SK-N-SH (cell line): ENCODE measurements at regions of chr14 and their contacts with region 1.

Region 1: DNA sequence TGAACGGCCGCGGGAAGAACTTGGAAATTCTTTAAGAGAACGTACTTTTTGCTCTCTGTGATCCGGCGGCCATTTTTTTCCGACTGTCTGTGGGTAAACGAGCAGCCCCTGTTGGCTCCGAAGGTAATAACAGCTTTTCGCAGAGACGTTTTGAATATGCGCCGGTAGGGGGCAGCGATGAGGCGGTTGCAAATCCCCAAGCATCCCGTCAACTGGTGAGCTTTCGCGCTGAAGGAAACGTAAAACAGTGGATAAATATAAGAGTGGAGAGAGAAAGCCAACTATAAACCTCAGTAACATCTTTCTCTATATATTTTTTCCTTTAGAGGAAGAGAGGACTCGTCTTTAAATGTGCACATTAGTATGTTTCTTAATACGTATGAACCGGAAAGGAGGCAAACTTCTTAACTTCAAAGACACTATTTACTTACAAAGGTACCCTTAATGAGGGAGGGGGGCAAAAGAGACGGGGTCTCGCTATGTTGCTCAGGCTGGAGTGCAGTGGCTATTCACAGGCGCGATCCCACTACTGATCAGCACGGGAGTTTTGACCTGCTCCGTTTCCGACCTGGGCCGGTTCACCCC is 9.6 kb upstream of the NEMF start:
- DNase-seq: peak; percentile 58
- H3K4me3 ChIP-seq: peak overlapping the region; percentile 61 to 98
- H3K27ac ChIP-seq: peak overlapping the region; percentile 84 to 93
- H3K4me1 ChIP-seq: peaks cover 3 to 5% of the 10 kb centered on the region in 2 experiments; a peak in 2 of 4 replicates
- H3K27me3 ChIP-seq: no peaks in the 10 kb centered on the region
- CTCF ChIP-seq: peak; percentile 100
- EP300 ChIP-seq: no peak
- RAD21 ChIP-seq: no peak

Region 2: DNA sequence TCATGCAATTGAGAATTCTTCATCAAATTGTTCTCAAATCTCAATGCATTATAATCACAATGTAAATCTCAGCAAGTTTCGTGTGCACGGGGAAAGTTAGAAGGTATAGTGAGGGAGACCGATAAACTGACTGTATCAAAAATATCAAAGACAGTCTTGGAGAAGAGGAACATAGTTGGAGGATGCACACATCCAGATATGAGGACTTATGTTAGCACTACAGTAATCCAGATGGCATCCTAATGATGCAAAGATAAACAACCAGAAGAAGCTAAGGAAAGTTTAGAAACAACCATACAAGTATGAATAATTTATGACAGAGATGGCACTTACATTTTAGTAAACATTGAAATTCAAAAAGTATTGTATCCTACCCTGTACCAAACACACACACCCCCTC is 1036.1 kb before region 1 on chr14:
- CTCF ChIA-PET with region 1: no interaction called
- POLR2A ChIA-PET with region 1: no interaction called
- DNase-seq: no peak
- H3K4me3 ChIP-seq: no peak overlapping the region
- H3K27ac ChIP-seq: no peak overlapping the region
- H3K4me1 ChIP-seq: no peaks in the 10 kb centered on the region
- H3K27me3 ChIP-seq: no peaks in the 10 kb centered on the region
- CTCF ChIP-seq: no peak
- EP300 ChIP-seq: no peak
- RAD21 ChIP-seq: no peak

Region 3: DNA sequence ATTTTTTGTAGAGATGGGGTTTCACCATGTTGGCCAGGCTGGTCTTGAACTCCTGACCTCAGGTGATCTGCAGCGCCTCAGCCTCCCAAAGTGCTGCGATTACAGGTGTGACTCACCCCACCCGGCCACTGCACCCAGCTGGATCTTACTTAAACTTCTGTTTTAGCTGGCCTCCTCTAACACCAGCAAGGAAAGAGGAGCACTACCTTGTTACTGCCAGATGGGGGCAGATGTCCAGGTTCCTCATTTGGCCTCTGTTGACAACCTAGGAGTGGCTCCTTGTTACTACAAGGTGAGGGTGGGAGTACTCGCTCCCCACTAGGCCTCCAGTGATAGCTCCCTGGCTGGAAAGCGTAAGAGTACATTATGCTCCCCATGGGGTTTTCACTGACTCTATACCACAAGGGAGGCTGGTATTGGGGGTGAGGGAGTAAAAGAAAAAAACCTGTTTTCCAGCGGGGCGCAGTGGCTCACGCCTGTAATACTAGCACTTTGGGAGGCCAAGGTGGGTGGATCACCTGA is 17.6 kb after region 1 on chr14:
- CTCF ChIA-PET with region 1: interaction called, 23 read pairs
- POLR2A ChIA-PET with region 1: no interaction called
- DNase-seq: peak; percentile 65
- H3K4me3 ChIP-seq: no peak overlapping the region
- H3K27ac ChIP-seq: no peak overlapping the region
- H3K4me1 ChIP-seq: no peaks in the 10 kb centered on the region
- H3K27me3 ChIP-seq: no peaks in the 10 kb centered on the region
- CTCF ChIP-seq: peak; percentile 69
- EP300 ChIP-seq: no peak
- RAD21 ChIP-seq: peak; percentile 70

Region 4: GRCh38 chr14:49892636-49893308 is 30.6 kb after region 1 on chr14 and contains the start of gene ARF6:
- CTCF ChIA-PET with region 1: interaction called, 13 read pairs
- POLR2A ChIA-PET with region 1: interaction called, 3 read pairs
- DNase-seq: peak; percentile 98
- H3K4me3 ChIP-seq: peak within 1 kb of the TSS; percentile 85 to 91
- H3K27ac ChIP-seq: peak within 1 kb of the TSS; percentile 93 to 98
- H3K4me1 ChIP-seq: peaks cover 12 to 19% of the 10 kb centered on the region in 2 experiments
- H3K27me3 ChIP-seq: no peaks in the 10 kb centered on the region
- CTCF ChIP-seq: no peak
- EP300 ChIP-seq: peak; percentile 2 to 4; a peak in 1 of 4 replicates
- RAD21 ChIP-seq: no peak; the same call in none of the 2 replicates
- polyA plus RNA-seq, gene ARF6: 32.2 and 45.2 TPM in 2 replicates

Region 5: DNA sequence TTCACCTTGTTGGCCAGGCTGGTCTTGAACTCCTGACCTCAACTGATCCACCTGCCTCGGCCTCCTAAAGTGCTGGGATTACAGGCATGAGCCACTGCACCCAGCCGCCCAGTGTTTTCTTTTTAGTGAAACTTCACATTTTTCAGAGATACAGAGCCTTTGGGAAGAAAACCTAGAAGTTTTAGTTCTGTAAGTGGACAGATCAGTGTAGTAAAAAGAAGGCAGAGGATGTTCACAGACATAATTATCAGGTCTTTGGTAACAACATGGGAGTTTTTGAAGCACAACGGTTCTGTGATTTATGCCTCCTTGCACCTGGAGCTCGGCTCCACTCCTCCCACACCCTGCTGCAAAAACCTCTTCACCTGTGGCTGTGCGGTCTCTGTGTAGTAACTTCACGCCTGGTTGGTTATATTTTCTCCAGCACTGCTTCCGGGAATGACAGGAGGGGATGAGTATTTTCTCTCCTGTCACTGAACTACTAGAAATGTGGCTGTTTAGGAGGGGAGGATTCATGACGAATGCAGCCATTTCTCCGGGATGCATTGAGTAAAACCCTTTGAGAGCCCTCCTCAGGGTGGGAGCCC is 97.7 kb after region 1 on chr14:
- CTCF ChIA-PET with region 1: no interaction called
- POLR2A ChIA-PET with region 1: no interaction called
- DNase-seq: no peak
- H3K4me3 ChIP-seq: no peak overlapping the region
- H3K27ac ChIP-seq: no peak overlapping the region
- H3K4me1 ChIP-seq: peaks cover 0 to 5% of the 10 kb centered on the region in 2 experiments; a peak in 1 of 4 replicates
- H3K27me3 ChIP-seq: no peaks in the 10 kb centered on the region
- CTCF ChIP-seq: no peak
- EP300 ChIP-seq: no peak
- RAD21 ChIP-seq: no peak

Region 6: DNA sequence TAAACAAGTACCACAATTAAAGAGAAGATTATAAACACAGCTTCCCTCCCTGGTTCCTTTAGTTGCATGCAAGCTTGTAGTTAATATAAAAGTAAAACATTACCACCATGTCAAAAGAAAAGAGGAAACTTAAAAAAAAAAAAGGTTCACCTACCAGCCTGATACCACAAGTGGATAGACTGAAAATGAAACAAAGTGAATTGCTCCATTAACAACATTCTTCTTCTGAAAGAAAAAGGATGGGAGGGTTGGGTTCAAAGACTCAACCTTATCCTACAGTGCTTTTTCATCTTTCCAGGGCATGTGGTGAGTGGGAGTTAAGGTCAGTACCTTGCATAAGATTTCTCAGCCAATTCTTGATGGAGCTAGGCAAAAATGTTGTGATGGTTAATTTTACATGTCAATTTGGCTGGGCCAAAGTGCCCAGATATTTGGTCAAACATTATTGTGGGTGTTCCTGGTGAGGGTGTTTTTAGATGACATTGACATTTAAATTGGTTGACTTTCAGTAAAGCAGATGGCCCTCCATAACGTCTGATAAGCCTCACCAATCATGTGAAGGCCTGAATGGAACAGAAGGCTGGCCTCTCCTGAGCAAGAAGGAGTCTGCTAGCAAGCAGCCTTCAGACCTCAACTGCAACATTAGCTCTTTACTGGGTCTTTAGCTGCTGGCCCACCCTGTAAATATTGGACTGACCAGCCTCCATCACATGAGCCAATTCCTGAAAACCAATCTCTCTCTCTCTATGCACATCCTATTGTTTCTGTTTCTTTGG is 225.3 kb after region 1 on chr14:
- CTCF ChIA-PET with region 1: interaction called, 13 read pairs
- POLR2A ChIA-PET with region 1: no interaction called
- DNase-seq: no peak
- H3K4me3 ChIP-seq: no peak overlapping the region
- H3K27ac ChIP-seq: no peak overlapping the region
- H3K4me1 ChIP-seq: no peaks in the 10 kb centered on the region
- H3K27me3 ChIP-seq: no peaks in the 10 kb centered on the region
- CTCF ChIP-seq: no peak
- EP300 ChIP-seq: no peak
- RAD21 ChIP-seq: no peak

Region 7: DNA sequence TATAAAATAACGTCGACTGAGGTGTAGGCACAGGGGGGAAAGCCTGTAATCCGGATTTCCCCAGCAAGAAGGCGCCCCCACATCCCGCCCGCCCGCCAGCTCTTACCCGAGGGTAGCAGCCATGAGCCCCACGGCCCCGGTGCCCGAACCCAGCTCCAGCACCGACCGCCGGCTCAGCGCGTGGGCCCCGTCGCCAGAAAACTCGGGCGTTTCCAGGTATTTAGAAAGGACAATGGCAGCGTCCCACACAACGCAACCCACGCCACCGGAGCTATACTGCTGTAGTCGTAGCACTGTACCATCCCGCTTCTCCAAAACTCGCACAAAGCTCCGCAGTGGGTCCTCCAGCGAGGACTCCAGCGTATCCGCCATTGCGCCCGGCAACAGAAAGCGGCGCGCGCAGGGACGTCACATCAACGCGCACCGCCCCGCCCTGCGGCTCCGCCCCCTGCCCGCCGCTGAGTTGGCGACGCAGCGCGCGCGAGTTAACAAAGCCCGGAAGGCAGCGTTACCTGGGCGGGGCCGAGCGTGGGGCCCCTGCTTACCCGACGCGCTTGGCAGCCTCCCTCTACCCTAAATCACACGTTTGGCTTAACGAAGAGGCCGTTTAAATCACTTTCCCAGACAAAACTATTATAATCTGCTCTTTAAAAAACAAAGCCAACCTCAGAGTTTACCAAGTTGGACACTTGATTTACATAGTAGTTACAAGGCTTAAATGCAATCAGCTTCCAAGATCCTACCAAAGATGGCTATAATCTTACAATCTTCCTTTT is 254.2 kb after region 1 on chr14 and contains the start of gene VCPKMT:
- CTCF ChIA-PET with region 1: interaction called, 27 read pairs
- POLR2A ChIA-PET with region 1: interaction called, 8 read pairs
- DNase-seq: peak; percentile 95
- H3K4me3 ChIP-seq: peak within 1 kb of the TSS; percentile 86 to 87
- H3K27ac ChIP-seq: peak within 1 kb of the TSS; percentile 88 to 92
- H3K4me1 ChIP-seq: peaks cover 8% of the 10 kb centered on the region in 2 experiments
- H3K27me3 ChIP-seq: no peaks in the 10 kb centered on the region
- CTCF ChIP-seq: no peak
- EP300 ChIP-seq: 0 out of 4 replicates have a peak, but pooled peaks of 1 of the 2 experiments have one; percentile 21
- RAD21 ChIP-seq: no peak
- polyA plus RNA-seq, gene VCPKMT: 6.7 and 7.3 TPM in 2 replicates

Region 8: DNA sequence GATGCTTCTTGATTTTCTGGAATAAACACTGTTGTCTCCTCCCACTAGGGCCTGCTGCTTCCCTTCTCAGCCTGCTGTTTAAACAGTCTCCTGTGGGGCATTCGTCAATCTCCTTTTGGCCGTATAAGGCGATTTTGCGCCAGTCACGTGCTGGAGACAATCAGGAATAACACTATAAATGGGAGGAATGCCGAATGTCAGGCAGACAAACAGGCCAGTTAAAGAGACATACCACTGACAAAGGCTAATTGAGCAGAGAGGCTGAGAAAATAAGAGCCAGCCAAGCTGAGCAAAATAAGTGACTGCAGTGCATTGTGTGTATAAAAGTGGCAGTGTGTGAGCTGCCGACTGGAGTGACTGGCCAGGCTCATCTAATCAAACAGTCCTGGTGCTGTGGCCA is 473.2 kb after region 1 on chr14:
- CTCF ChIA-PET with region 1: interaction called, 10 read pairs
- POLR2A ChIA-PET with region 1: no interaction called
- DNase-seq: peak; percentile 55
- H3K4me3 ChIP-seq: no peak overlapping the region
- H3K27ac ChIP-seq: peak overlapping the region; percentile 49 to 98; a peak in 3 of 4 replicates
- H3K4me1 ChIP-seq: peaks cover 17 to 25% of the 10 kb centered on the region in 2 experiments; a peak in 3 of 4 replicates
- H3K27me3 ChIP-seq: no peaks in the 10 kb centered on the region
- CTCF ChIP-seq: peak; percentile 16; the same call in 1 of the 2 replicates
- EP300 ChIP-seq: no peak
- RAD21 ChIP-seq: 0 out of 2 replicates have a peak, but pooled peaks have one; percentile 30